PC-3 (cell line): ENCODE measurements at regions of chr3 and their contacts with region 1.

Region 1: GRCh38 chr3:57755668-57756527 is at the start of gene SLMAP:
- DNase-seq: peak; percentile 98
- ATAC-seq: peak; percentile 72
- H3K4me3 ChIP-seq: peak within 1 kb of the TSS; percentile 90
- H3K27ac ChIP-seq: peak within 1 kb of the TSS; percentile 45
- H3K4me1 ChIP-seq: peaks cover 49% of the 10 kb centered on the region
- H3K27me3 ChIP-seq: no peaks in the 10 kb centered on the region
- CTCF ChIP-seq: no peak
- total RNA-seq, gene SLMAP: 55.2 and 60.0 TPM in 2 replicates

Region 2: DNA sequence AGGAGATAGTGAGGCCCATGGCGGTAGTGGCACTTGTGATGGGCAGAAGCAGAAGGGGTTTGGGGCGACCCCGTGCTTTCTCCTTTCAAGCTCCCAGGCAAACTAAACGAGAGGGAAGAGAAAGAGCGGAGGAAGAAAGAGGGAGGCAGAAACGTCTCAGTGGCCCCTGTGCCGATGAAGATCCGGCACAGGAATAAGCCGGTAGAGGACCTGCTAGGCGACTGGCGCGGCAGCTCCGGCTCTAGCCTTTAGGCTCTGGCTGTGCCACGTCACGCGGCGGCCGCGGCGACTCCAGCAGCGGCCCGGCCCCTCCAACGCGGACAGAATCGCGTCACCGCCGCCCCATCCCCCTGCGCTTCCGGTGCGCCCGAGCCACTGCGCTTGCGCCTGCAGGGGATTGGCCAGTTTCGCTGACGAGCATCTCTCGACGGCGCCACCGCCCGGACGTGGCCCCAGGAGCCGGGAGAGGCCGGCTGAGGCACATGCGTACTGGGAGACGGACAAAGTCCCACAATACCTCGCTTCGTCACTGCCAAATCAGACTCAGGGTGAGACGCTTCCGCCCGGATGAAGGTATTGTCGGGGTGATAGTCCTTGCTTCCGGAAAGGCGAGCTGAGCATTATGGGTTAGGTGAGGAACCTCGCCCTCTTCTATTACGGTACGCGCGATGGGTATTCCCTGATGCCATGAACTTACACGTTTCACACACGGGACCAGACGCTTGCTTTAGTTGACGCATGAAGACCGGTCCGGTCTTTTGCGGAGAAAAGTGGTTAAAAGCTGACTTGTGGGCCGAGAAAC is 158.6 kb before region 1 on chr3 and contains the start of gene ARF4:
- CTCF ChIA-PET with region 1: no interaction called
- POLR2A ChIA-PET with region 1: interaction called, 4 read pairs
- intact Hi-C with region 1: loop called (anchors 1 kb)
- DNase-seq: peak; percentile 99
- ATAC-seq: peak; percentile 87
- H3K4me3 ChIP-seq: peak within 1 kb of the TSS; percentile 99
- H3K27ac ChIP-seq: peak within 1 kb of the TSS; percentile 93
- H3K4me1 ChIP-seq: peaks cover 28% of the 10 kb centered on the region
- H3K27me3 ChIP-seq: no peaks in the 10 kb centered on the region
- CTCF ChIP-seq: 0 out of 2 replicates have a peak, but pooled peaks have one; percentile 24
- total RNA-seq, gene ARF4: 130 and 135 TPM in 2 replicates

Region 3: DNA sequence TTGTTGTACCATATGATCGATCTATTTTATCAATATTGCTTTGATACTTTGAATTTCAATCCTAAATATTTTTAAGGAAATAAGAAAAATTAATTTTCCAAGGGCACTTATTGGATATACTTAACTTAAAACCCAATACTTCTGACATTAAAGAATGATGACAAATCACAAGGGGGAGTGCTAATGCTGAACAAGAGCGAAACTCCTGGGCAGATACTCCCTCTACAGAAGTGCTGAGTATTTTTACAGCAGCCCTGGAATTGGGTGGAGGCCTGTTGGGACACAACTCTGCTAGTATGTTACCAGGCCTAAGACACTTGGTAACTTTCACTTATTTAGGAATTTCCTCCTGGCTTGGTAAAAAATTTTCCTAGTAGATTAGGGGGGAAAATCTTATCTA is 109.2 kb before region 1 on chr3:
- CTCF ChIA-PET with region 1: no interaction called
- POLR2A ChIA-PET with region 1: interaction called, 4 read pairs
- intact Hi-C with region 1: loop called (anchors 2 kb)
- DNase-seq: peak; percentile 49
- ATAC-seq: peak; percentile 97
- H3K4me3 ChIP-seq: no peak overlapping the region
- H3K27ac ChIP-seq: no peak overlapping the region
- H3K4me1 ChIP-seq: no peaks in the 10 kb centered on the region
- H3K27me3 ChIP-seq: no peaks in the 10 kb centered on the region
- CTCF ChIP-seq: peak; percentile 58

Region 4: DNA sequence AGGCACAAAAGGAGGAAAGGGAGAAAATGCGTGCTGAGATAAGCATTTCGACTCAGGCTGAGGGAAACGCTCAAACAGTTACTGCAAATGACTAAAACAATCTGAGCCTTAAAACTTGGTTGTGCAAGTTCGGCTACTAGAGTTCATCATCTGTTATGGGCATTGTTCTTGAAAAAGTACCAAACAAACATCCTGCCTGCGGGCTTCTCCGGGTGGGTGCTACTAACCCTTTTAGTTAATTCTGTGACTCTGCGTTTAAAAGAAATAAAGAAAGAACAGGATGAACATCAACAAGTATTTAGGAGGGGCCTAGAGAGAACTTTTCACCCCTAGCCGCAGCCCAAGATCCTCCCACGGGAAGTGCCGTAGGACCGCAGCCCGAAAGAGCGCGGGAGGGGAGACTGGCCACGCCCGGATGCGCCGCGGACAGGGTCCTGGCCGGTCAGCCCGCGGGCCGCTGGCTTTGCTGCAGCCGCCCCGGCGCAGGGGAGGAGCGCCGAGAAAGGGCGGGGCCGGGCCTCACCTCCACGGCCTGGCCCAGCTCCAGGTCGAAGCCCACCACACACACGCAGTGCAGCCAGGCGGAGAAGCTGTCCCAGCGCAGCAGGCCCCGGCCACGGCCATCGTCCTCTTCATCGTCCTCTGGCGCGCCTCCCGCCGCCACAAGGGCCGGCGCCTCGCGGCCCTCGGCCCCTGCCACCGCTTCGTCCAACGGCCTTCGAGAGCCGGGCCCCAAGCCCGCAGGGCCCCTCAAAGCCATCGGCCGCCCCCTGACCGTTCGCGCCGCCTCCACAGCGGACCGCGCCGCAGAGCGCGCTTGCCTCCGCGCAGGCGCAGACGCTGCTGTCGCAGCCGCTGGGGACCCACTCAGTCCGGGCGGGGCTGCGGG is 63.4 kb before region 1 on chr3 and contains the start of gene DENND6A:
- CTCF ChIA-PET with region 1: no interaction called
- POLR2A ChIA-PET with region 1: interaction called, 6 read pairs
- intact Hi-C with region 1: loop called (anchors 1 kb)
- DNase-seq: peak; percentile 94
- ATAC-seq: peak; percentile 90
- H3K4me3 ChIP-seq: peak within 1 kb of the TSS; percentile 68
- H3K27ac ChIP-seq: peak within 1 kb of the TSS; percentile 90
- H3K4me1 ChIP-seq: peaks cover 27% of the 10 kb centered on the region
- H3K27me3 ChIP-seq: no peaks in the 10 kb centered on the region
- CTCF ChIP-seq: no peak
- total RNA-seq, gene DENND6A: 16.9 and 17.6 TPM in 2 replicates

Region 5: DNA sequence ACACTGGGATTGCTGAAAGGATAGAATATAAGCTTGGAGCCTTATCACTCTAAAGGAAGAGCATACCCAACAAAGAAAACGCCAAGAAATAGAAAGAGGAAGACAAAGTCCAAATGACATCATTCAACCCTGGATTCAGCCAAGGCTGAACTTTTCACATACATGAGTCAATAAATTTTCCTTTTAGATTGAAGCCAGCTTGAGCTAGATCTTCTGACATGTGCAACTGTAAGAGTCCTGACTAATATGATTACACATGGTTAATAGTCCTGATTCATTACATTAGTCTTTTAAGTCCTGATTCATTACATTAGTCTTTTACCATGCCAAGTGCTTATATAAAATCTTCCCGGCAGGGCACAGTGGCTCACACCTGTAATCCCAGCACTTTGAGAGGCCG is 49.4 kb before region 1 on chr3:
- CTCF ChIA-PET with region 1: no interaction called
- POLR2A ChIA-PET with region 1: no interaction called
- intact Hi-C with region 1: loop called (anchors 2 kb)
- DNase-seq: peak; percentile 94
- ATAC-seq: peak; percentile 86
- H3K4me3 ChIP-seq: no peak overlapping the region
- H3K27ac ChIP-seq: peak overlapping the region; percentile 74
- H3K4me1 ChIP-seq: peaks cover 20% of the 10 kb centered on the region
- H3K27me3 ChIP-seq: no peaks in the 10 kb centered on the region
- CTCF ChIP-seq: no peak

Region 6: GRCh38 chr3:57803647-57804081 is 47.8 kb after region 1 on chr3:
- CTCF ChIA-PET with region 1: interaction called, 3 read pairs
- POLR2A ChIA-PET with region 1: no interaction called
- intact Hi-C with region 1: loop called (anchors 2 kb)
- DNase-seq: peak; percentile 97
- ATAC-seq: peak; percentile 79
- H3K4me3 ChIP-seq: peak overlapping the region; percentile 36
- H3K27ac ChIP-seq: peak overlapping the region; percentile 90
- H3K4me1 ChIP-seq: peaks cover 51% of the 10 kb centered on the region
- H3K27me3 ChIP-seq: no peaks in the 10 kb centered on the region
- CTCF ChIP-seq: no peak

Region 7: DNA sequence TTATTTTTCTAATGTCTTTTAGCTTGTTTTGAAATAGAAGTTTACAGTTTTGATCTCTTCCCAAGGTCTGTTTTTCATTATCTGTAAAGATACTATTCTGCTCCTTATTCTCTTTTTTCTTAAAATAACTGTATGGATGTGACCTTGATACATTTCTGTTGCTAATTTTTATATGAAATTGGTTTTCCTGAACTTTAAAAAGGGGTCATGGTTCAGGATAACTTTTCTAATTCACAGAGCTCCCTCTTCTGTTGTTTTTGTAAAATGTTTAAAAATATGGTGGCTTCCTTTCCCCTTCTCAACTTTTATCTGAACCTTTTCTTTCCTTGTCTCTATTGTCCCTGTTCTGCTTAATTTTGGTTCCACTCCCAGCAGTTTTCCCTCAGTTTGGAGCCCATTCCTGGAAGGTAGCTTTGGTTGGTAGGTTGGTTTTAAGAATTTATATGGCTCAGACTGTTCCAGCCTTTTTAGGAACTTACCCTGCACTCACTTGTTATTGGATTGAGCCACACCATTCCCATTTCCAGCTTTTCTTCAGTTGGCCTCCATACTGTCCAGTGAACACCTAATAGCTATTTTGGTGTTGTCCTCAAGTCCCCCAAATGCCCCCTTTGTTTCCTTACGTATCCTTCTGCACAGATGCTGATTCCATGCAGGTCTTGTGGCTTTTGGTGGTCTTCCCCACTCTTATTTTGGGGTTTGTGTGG is 70.5 kb after region 1 on chr3:
- CTCF ChIA-PET with region 1: interaction called, 3 read pairs
- POLR2A ChIA-PET with region 1: no interaction called
- intact Hi-C with region 1: loop called (anchors 1 kb)
- DNase-seq: peak; percentile 26
- ATAC-seq: peak; percentile 33
- H3K4me3 ChIP-seq: no peak overlapping the region
- H3K27ac ChIP-seq: no peak overlapping the region
- H3K4me1 ChIP-seq: peaks cover 11% of the 10 kb centered on the region; the same call in 1 of the 2 replicates
- H3K27me3 ChIP-seq: no peaks in the 10 kb centered on the region
- CTCF ChIP-seq: peak; percentile 71

Region 8: GRCh38 chr3:58801541-58801940 is 1045.6 kb after region 1 on chr3:
- CTCF ChIA-PET with region 1: no interaction called
- POLR2A ChIA-PET with region 1: no interaction called
- intact Hi-C with region 1: no loop called
- DNase-seq: no peak
- ATAC-seq: no peak
- H3K4me3 ChIP-seq: no peak overlapping the region
- H3K27ac ChIP-seq: no peak overlapping the region
- H3K4me1 ChIP-seq: no peaks in the 10 kb centered on the region
- H3K27me3 ChIP-seq: no peaks in the 10 kb centered on the region
- CTCF ChIP-seq: no peak